Panc1 (cell line): ENCODE measurements at regions of chr11 and their contacts with region 1.

Region 1: DNA sequence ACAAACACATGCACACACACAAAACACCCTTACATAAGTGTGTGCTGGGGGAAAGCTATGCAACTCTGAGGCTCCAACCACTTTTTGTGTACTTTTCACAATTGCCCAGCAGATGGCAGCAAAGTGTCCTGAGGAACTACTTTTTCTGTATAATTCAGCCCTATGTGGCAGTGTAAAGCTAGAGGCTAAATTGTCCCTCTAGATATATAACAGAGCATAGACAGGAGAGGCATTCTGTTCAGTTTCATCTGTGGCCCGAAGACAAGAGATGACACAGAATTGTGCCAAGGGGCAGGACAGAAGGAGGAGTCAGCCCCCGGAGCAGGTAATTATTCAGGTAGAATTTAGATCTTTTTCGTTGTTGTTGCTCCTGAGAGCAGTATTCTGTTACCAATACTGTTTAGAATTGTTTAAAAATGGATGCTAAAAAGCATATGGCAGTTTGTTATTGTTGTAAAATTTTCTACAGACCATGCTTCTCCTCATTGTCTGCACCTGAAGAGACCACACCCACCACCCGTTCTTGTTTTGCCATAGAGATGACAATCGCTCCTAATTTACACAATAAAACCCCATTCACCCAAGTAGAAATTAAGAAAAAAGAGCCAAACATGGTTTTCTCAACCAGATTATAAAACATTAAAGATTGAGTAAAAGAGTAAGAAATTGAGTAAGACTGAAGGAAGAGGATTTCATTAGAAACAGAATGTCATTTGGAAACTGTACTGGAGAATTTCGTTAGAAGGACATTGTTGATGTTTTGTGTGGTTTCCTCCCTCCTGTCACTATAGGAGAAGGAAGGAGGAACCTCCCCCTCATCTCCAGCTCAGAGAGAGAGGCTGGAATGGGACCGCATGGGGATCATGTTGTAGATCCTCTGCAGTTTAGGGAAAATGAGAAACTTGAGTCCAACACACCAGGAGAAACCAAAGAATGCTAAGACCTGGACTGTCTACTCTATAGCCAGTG is 14.5 kb upstream of the MS4A7 start:
- DNase-seq: peak; percentile 43
- ATAC-seq: peak; percentile 91
- H3K4me3 ChIP-seq: no peak overlapping the region
- H3K27ac ChIP-seq: peak overlapping the region; percentile 32; the same call in 1 of the 2 replicates
- H3K4me1 ChIP-seq: peaks cover 5% of the 10 kb centered on the region; the same call in 1 of the 2 replicates
- H3K27me3 ChIP-seq: no peaks in the 10 kb centered on the region
- CTCF ChIP-seq: peak; percentile 84

Region 2: GRCh38 chr11:60485986-60486385 is 122.2 kb after region 1 on chr11:
- CTCF ChIA-PET with region 1: interaction called, 5 read pairs
- POLR2A ChIA-PET with region 1: no interaction called
- in situ Hi-C with region 1: no loop called
- intact Hi-C with region 1: loop called (anchors 1 kb)
- DNase-seq: peak; percentile 54
- ATAC-seq: peak; percentile 91
- H3K4me3 ChIP-seq: no peak overlapping the region
- H3K27ac ChIP-seq: no peak overlapping the region
- H3K4me1 ChIP-seq: no peaks in the 10 kb centered on the region
- H3K27me3 ChIP-seq: no peaks in the 10 kb centered on the region
- CTCF ChIP-seq: peak; percentile 83

Region 3: DNA sequence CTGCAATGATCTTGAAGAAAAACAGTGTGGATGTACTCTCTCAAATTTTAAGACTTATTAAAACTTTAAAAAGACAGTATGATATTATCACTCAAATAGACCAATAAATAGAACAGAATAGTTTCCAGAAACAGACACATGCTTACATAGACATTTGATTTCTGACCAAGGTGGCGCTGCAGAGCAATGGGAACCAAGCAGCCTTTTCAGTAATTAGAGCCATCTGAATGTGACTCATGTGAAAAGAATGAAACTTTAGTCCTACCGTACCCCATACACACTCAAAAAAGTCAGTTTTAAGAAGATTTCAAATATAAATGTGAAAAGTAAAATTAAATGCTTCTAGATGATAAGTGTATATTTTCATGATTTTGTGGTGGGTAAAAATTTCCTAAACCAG is 261.4 kb after region 1 on chr11:
- CTCF ChIA-PET with region 1: interaction called, 10 read pairs
- POLR2A ChIA-PET with region 1: no interaction called
- in situ Hi-C with region 1: no loop called
- intact Hi-C with region 1: no loop called
- DNase-seq: no peak
- ATAC-seq: no peak
- H3K4me3 ChIP-seq: no peak overlapping the region
- H3K27ac ChIP-seq: no peak overlapping the region
- H3K4me1 ChIP-seq: no peaks in the 10 kb centered on the region
- H3K27me3 ChIP-seq: no peaks in the 10 kb centered on the region
- CTCF ChIP-seq: no peak; the same call in 1 of the 2 replicates